ENCODE measurements at regions of chr7 and their contacts with region 1.

Region 1: GRCh38 chr7:16918288-16918895 is 36.6 kb upstream of the AGR3 start:
- DNase-seq: no peak
- H3K4me3 Mint-ChIP-seq: no peak overlapping the region
- H3K27ac Mint-ChIP-seq: no peak overlapping the region
- H3K4me1 Mint-ChIP-seq: peaks cover 10% of the 10 kb centered on the region
- H3K27me3 Mint-ChIP-seq: peaks cover 2% of the 10 kb centered on the region

Region 2: DNA sequence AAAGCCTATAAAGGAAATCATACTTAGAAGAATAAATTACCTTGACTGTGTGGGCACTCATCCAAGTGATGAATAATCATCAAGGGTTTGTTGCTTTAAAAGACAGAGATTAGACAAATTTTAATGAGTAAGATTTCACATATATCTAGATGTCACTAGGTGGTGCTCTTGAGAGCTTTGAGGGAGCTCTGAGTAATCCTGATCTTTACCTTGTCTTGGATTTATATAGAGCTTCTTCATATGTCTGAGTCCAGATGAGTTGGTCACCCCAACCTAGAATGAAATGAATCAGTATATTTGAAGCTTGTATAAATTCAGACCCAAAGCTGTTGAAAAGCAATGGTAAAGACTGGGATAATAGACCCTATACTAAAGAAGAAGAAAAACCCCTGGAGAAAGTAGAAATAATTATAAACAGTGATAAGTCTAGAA is 117.3 kb before region 1 on chr7:
- CTCF ChIA-PET with region 1: interaction called, 22 read pairs
- POLR2A ChIA-PET with region 1: no interaction called
- DNase-seq: no peak
- H3K4me3 Mint-ChIP-seq: no peak overlapping the region
- H3K27ac Mint-ChIP-seq: no peak overlapping the region
- H3K4me1 Mint-ChIP-seq: no peaks in the 10 kb centered on the region
- H3K27me3 Mint-ChIP-seq: peaks cover 15% of the 10 kb centered on the region

Region 3: GRCh38 chr7:16841681-16842080 is 76.7 kb before region 1 on chr7:
- CTCF ChIA-PET with region 1: no interaction called
- POLR2A ChIA-PET with region 1: no interaction called
- DNase-seq: no peak
- H3K4me3 Mint-ChIP-seq: no peak overlapping the region
- H3K27ac Mint-ChIP-seq: no peak overlapping the region
- H3K4me1 Mint-ChIP-seq: no peaks in the 10 kb centered on the region
- H3K27me3 Mint-ChIP-seq: peaks cover 10% of the 10 kb centered on the region

Region 4: DNA sequence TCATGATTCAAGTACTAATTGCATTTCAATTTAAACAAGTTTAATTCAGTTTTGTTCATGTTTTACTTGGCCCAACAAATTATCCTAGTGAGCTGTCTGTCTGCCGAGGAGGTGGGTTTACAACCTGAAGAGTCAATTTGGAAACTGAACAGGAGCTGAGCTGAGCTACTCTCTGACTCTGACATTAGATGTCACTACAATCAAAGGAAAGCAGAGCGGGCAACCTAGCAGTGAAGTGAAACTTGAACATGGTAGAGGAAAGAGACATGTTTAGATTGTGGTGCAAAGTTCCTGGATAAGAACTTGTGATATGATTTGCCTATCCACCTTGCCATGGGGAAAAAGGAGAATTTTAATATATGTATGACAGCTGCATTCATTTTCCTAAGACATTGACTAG is 27.1 kb before region 1 on chr7:
- CTCF ChIA-PET with region 1: interaction called, 15 read pairs
- POLR2A ChIA-PET with region 1: no interaction called
- DNase-seq: no peak
- H3K4me3 Mint-ChIP-seq: no peak overlapping the region
- H3K27ac Mint-ChIP-seq: no peak overlapping the region
- H3K4me1 Mint-ChIP-seq: peaks cover 20% of the 10 kb centered on the region
- H3K27me3 Mint-ChIP-seq: peaks cover 2% of the 10 kb centered on the region

Region 5: DNA sequence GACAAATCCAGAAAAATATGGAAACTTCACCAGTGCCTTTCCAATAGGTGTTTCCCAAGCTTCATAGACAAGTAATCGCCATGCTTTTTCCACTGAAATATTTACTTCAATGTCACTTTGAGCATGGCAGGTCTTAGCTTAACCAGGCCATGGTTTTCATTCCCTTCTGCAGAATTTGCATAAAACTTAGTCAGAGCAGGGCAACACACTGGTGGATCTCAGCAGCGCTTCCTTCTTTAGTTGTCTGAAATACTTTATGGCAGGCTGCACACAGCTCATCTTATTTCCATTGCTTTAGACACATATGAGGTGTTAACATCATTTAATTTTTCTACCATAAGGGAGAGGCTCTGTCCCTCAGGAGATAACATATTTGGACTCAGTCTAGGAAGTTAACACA is 277.2 kb after region 1 on chr7:
- CTCF ChIA-PET with region 1: no interaction called
- POLR2A ChIA-PET with region 1: no interaction called
- DNase-seq: no peak
- H3K4me3 Mint-ChIP-seq: no peak overlapping the region
- H3K27ac Mint-ChIP-seq: no peak overlapping the region
- H3K4me1 Mint-ChIP-seq: peaks cover 5% of the 10 kb centered on the region
- H3K27me3 Mint-ChIP-seq: no peaks in the 10 kb centered on the region

Measured in activated CD4-positive, alpha-beta memory T cell treated with anti-CD3 and anti-CD28 coated beads, Interleukin-2, amount 10 ng/mL, durations not matched to agents 7 days and 5 days (primary cell).